ENCODE measurements at regions of chr4 and their contacts with region 1.

Region 1: DNA sequence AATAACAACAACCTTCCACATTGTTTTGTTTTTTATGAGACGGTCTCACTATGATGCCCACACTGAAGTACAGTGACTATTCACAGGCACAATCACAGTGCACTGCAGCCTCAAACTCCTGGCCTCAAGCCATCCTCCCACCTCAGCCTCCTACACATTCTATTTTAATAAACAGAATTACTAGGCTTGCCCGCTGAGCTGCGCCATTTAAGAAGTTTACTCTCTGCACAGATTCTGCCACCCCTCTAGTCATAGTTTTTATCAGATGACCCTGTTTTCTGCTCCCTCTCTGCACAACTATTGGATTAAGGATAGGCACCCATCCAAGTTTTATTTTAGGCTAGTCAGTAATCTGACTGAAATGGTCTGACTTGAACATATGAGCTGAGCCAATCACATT is 11.3 kb upstream of the COX18 start:
- DNase-seq: no peak
- H3K4me3 ChIP-seq: no peak overlapping the region
- H3K27ac ChIP-seq: no peak overlapping the region
- H3K4me1 ChIP-seq: no peaks in the 10 kb centered on the region
- H3K27me3 ChIP-seq: no peaks in the 10 kb centered on the region
- CTCF ChIP-seq: no peak
- POLR2A ChIP-seq: no peak

Region 2: DNA sequence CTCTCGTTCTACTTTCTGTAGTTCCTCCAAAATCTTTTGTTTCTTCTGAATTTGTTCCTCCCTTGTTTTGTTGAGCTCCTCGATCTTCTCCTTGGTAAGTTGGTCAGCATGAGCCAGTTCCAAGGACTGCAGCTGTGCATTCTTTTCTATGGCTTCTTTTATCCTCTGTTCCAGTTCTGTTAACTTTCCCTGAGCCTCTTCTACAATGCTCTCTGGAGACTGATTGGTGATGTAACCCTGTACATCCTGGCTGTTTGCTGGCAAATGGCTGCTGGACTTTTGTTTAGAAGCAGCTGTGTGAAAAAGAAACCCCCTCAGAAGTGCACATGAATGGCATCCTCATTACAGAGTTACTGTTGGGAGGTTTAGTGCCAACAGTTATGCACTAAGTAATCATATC is 59.2 kb after region 1 on chr4:
- intact Hi-C with region 1: loop called in 1 of 2 experiments (anchors 10 kb)
- DNase-seq: no peak
- H3K4me3 ChIP-seq: no peak overlapping the region
- H3K27ac ChIP-seq: no peak overlapping the region
- H3K4me1 ChIP-seq: no peaks in the 10 kb centered on the region
- H3K27me3 ChIP-seq: no peaks in the 10 kb centered on the region
- CTCF ChIP-seq: no peak
- POLR2A ChIP-seq: no peak

Measured in adrenal gland (tissue), 19 donors.